ENCODE measurements at regions of chr7 and their contacts with region 1.

Region 1: DNA sequence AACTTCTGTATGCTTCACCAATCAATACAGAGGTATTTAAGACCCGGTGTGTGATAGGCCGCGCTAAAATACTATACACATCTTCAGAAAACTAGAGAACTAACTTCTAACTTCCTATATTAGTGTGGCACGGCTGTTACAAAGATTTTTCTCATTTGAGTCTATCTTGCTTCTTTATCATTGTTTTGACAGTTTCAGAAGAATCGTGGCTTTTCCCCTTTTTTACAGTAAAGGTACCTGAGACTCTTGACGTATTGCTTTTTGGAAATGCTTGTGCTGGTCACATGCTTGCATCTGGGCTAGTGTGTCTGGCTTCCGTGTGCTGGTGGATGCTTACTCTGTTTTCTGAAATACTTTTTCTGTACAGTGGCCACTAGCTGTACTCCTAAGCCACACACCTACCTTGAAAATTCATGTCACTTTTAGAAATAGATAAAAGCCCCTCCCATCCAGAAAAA is 12.7 kb downstream of the IKZF1 start:
- DNase-seq: peak; percentile 64
- H3K4me3 Mint-ChIP-seq: peak overlapping the region; percentile 97
- H3K27ac Mint-ChIP-seq: peak overlapping the region; percentile 100
- H3K4me1 Mint-ChIP-seq: peaks cover 96% of the 10 kb centered on the region
- H3K27me3 Mint-ChIP-seq: no peaks in the 10 kb centered on the region

Region 2: GRCh38 chr7:50304158-50304910 is 12.9 kb before region 1 on chr7 and contains the start of gene IKZF1:
- CTCF ChIA-PET with region 1: interaction called, 12 read pairs
- POLR2A ChIA-PET with region 1: interaction called, 4 read pairs
- DNase-seq: peak; percentile 57
- H3K4me3 Mint-ChIP-seq: peak within 1 kb of the TSS; percentile 97
- H3K27ac Mint-ChIP-seq: peak within 1 kb of the TSS; percentile 100
- H3K4me1 Mint-ChIP-seq: peaks cover 38% of the 10 kb centered on the region
- H3K27me3 Mint-ChIP-seq: no peaks in the 10 kb centered on the region
- total RNA-seq, gene IKZF1: 379 to 406 TPM

Region 3: DNA sequence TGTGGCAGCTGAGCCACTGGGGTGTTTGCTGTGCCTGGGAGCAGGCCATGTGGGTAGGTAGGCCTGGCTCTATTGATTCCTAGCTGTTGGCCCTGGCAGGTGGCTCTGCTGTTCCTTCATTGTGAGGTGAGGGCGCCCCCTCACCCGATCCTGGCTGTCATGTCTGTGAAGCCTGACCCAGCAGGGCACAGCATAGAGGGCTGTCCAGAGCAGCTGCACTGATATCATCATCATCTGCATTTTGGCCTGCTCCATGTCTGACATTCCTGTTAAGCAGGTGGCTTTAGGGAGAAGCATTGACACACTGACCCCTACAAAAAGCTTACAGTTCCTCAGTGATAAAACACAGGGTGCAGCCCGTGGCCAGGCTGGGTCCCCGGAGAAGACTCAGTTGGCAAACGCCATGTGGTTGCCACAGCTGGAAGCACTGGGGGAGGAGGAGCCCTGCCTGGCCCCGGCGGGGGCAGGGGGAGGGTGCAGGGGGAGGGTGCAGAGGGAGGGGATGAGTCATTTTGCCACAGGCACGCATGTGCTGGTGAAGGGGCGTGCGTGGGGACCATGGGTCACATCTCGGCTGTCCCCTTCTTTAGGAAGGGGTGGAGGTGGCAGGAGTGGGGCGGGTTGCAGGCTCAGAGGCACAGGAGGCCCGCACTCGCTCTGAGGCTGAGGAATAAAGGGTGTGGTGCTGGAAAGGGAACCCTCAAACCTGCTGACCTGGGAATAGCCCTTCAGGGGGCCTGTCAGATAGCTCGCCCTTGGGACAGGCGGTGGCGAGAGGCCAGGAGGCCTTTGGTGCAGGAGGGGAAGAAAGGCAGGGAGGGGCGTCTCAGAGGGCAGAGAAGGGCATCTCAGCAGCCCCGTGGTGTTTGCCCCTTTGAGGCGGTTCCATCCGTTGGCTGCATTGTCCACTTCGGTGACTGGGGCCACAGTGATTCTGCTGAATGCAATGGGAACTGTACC is 18.8 kb after region 1 on chr7:
- CTCF ChIA-PET with region 1: interaction called, 10 read pairs
- POLR2A ChIA-PET with region 1: interaction called, 10 read pairs
- DNase-seq: peak; percentile 81
- H3K4me3 Mint-ChIP-seq: no peak overlapping the region
- H3K27ac Mint-ChIP-seq: no peak overlapping the region
- H3K4me1 Mint-ChIP-seq: no peaks in the 10 kb centered on the region
- H3K27me3 Mint-ChIP-seq: no peaks in the 10 kb centered on the region

Region 4: GRCh38 chr7:50449881-50450589 is 132.8 kb after region 1 on chr7 and contains the start of gene FIGNL1:
- CTCF ChIA-PET with region 1: no interaction called
- POLR2A ChIA-PET with region 1: no interaction called
- DNase-seq: peak; percentile 83
- H3K4me3 Mint-ChIP-seq: peak within 1 kb of the TSS; percentile 92
- H3K27ac Mint-ChIP-seq: peak within 1 kb of the TSS; percentile 96
- H3K4me1 Mint-ChIP-seq: peaks cover 51% of the 10 kb centered on the region
- H3K27me3 Mint-ChIP-seq: peaks cover 8% of the 10 kb centered on the region
- total RNA-seq, gene FIGNL1: 34.8 to 37.4 TPM